Spleen (tissue), 13 donors: ENCODE measurements at regions of chr1 and their contacts with region 1.

Region 1: GRCh38 chr1:41516168-41517061 is 31.9 kb upstream of the EDN2 start:
- DNase-seq: peak; percentile 94
- H3K4me3 ChIP-seq: peak overlapping the region; percentile 1 to 65 (median 32)
- H3K27ac ChIP-seq: no peak overlapping the region
- H3K4me1 ChIP-seq: peaks cover 5 to 22% (median 16%) of the 10 kb centered on the region in 6 donors
- H3K27me3 ChIP-seq: no peaks in the 10 kb centered on the region
- CTCF ChIP-seq: peak; percentile 43 to 96 (median 90)
- POLR2A ChIP-seq: no peak

Region 2: DNA sequence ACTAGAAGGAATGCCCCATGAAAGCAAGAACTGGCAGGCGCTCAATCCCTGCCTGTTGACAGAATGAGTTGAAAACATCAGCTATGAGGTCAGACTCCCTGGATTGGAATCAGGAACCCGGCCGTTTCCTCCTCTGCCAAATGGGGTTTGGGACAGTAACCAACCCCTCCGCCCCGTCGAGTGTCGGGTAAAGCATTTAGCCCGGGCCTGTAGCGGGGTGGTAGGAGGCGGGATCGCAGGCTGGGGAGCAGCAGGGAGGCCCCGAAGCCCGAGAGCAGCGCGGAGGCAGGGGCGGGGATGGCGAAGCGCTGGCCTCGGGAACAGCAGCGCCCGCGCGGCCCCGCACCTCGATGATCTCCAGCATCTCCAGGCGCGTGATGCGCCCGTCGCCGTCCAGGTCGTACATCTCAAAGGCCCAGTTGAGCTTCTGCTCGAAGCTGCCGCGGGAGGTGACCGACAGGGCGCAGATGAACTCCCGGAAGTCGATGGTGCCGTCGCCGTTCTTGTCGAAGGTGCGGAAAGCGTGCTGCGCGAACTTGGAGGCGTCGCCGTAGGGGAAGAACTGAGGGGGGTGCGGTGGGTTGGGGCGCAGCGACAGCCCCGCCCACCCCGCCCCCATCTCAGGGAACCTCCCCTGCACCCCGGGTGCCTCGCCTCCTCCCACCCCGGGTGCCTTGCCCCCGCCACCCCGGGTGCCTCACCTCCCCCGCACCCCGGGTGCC is 1832.7 kb before region 1 on chr1:
- intact Hi-C with region 1: no loop called
- DNase-seq: no peak
- H3K4me3 ChIP-seq: peak overlapping the region in 4 of 8 donors; percentile 2 to 54 (median 4)
- H3K27ac ChIP-seq: peak overlapping the region in 1 of 8 donors; percentile 2
- H3K4me1 ChIP-seq: peaks cover 0 to 12% (median 4%) of the 10 kb centered on the region in 6 donors
- H3K27me3 ChIP-seq: peaks cover 0 to 90% (median 39%) of the 10 kb centered on the region in 7 donors
- CTCF ChIP-seq: no peak
- POLR2A ChIP-seq: no peak

Region 3: GRCh38 chr1:41268154-41268770 is 248.2 kb before region 1 on chr1:
- intact Hi-C with region 1: loop called (anchors 2 kb)
- DNase-seq: peak; percentile 90
- H3K4me3 ChIP-seq: no peak overlapping the region
- H3K27ac ChIP-seq: no peak overlapping the region
- H3K4me1 ChIP-seq: peaks cover 0 to 9% (median 3%) of the 10 kb centered on the region in 6 donors
- H3K27me3 ChIP-seq: peaks cover 0 to 3% (median 0%) of the 10 kb centered on the region in 7 donors
- CTCF ChIP-seq: peak; percentile 83 to 97 (median 96)
- POLR2A ChIP-seq: no peak